Natural killer cell (primary cell): ENCODE measurements at regions of chr6 and their contacts with region 1.

Region 1: GRCh38 chr6:13814176-13814937 is at the start of gene MCUR1:
- DNase-seq: peak; percentile 76 to 91
- ATAC-seq: peak; percentile 84 to 91 (median 90)
- H3K4me3 ChIP-seq: peak within 1 kb of the TSS; percentile 63
- H3K4me3 Mint-ChIP-seq: peak within 1 kb of the TSS; percentile 89
- H3K27ac ChIP-seq: peak within 1 kb of the TSS; percentile 69
- H3K27ac Mint-ChIP-seq: peak within 1 kb of the TSS; percentile 70 to 82
- H3K4me1 ChIP-seq: peaks cover 8% of the 10 kb centered on the region
- H3K4me1 Mint-ChIP-seq: peaks cover 29 to 33% of the 10 kb centered on the region in 2 donors
- H3K27me3 ChIP-seq: no peaks in the 10 kb centered on the region
- H3K27me3 Mint-ChIP-seq: no peaks in the 10 kb centered on the region
- CTCF ChIP-seq: no peak
- total RNA-seq, gene MCUR1: 6.0 to 9.6 (median 7.9) TPM

Region 2: DNA sequence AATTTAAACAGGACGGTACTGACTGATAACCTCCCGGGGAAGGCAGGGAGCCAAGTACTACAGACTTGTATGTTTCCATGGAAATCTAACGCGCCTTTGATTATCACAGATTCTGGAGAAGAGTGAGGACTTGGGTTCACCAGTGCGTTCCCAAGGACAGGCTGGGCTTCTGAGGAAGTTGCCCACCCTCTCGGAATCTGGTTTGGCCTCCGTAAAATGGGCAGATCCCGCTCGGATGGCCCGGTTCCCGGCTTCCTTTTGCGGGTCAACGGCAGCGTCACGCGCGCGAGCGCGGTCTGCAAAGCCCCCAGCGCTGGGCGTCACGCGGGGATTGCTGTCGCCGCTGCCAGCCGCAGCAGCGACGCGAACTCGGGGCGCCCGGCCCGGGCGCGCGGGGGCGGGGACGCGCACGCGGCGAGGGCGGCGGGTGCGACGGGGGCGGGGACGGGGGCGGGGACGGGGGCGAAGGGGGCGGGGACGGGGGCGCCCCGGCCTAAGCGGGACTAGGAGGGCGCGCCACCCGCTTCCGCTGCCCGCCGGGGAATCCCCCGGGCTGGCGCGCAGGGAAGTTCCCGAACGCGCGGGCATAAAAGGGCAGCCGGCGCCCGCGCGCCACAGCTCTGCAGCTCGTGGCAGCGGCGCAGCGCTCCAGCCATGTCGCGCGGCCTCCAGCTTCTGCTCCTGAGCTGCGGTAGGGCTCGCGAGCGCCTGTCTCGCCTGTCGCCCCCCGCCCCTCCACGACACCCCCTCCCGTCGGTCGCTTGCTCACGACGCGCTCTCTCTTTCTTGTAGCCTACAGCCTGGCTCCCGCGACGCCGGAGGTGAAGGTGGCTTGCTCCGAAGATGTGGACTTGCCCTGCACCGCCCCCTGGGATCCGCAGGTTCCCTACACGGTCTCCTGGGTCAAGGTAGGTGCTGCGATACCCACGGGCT is 303.1 kb after region 1 on chr6 and contains the start of gene CD83:
- intact Hi-C with region 1: loop called (anchors 5 kb)
- DNase-seq: peak; percentile 88 to 96
- ATAC-seq: peak; percentile 92 to 98 (median 93)
- H3K4me3 ChIP-seq: peak within 1 kb of the TSS; percentile 76
- H3K4me3 Mint-ChIP-seq: peak within 1 kb of the TSS; percentile 94
- H3K27ac ChIP-seq: peak within 1 kb of the TSS; percentile 92
- H3K27ac Mint-ChIP-seq: peak within 1 kb of the TSS; percentile 92 to 98
- H3K4me1 ChIP-seq: peaks cover 18% of the 10 kb centered on the region
- H3K4me1 Mint-ChIP-seq: peaks cover 20 to 25% of the 10 kb centered on the region in 2 donors
- H3K27me3 ChIP-seq: no peaks in the 10 kb centered on the region
- H3K27me3 Mint-ChIP-seq: peaks cover under 1 to 10% of the 10 kb centered on the region in 2 donors
- CTCF ChIP-seq: no peak
- total RNA-seq, gene CD83: 54.8 to 110 (median 64.3) TPM